ENCODE measurements at regions of chr18 and their contacts with region 1.

Region 1: DNA sequence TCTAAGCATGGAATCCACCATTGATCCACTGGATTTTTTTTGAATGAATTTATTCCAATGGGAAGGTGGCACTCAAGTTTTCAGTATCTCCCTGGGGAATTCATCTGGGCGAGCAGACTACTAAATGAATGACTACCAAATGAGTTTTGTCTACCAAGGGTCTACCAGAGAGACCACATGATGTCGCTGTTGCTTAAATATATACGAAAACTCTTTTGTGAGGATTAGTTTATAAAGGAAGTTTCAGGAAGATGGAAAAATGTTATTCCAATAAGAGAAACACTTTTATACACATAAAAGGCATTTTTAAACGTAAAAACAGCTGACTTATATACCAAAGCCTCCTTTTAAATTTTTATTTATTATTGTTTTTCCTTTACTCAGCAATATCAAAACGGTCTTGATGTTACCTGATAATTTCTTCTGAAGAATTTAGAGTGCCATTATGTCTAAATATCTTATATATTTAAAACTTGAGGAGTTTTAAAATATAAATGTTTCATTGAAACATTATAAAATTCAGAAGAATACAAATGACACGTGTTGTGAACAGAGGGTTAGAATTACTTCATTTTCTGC is 139.7 kb downstream of the HRH4 start:
- DNase-seq: no peak
- H3K4me3 ChIP-seq: no peak overlapping the region
- H3K27ac ChIP-seq: no peak overlapping the region
- H3K4me1 ChIP-seq: no peaks in the 10 kb centered on the region
- H3K27me3 ChIP-seq: peaks cover 28% of the 10 kb centered on the region
- CTCF ChIP-seq: peak; percentile 78

Region 2: GRCh38 chr18:24111936-24112335 is 488.2 kb before region 1 on chr18:
- intact Hi-C with region 1: no loop called
- DNase-seq: no peak
- H3K4me3 ChIP-seq: no peak overlapping the region
- H3K27ac ChIP-seq: no peak overlapping the region
- H3K4me1 ChIP-seq: no peaks in the 10 kb centered on the region
- H3K27me3 ChIP-seq: no peaks in the 10 kb centered on the region
- CTCF ChIP-seq: no peak

Region 3: DNA sequence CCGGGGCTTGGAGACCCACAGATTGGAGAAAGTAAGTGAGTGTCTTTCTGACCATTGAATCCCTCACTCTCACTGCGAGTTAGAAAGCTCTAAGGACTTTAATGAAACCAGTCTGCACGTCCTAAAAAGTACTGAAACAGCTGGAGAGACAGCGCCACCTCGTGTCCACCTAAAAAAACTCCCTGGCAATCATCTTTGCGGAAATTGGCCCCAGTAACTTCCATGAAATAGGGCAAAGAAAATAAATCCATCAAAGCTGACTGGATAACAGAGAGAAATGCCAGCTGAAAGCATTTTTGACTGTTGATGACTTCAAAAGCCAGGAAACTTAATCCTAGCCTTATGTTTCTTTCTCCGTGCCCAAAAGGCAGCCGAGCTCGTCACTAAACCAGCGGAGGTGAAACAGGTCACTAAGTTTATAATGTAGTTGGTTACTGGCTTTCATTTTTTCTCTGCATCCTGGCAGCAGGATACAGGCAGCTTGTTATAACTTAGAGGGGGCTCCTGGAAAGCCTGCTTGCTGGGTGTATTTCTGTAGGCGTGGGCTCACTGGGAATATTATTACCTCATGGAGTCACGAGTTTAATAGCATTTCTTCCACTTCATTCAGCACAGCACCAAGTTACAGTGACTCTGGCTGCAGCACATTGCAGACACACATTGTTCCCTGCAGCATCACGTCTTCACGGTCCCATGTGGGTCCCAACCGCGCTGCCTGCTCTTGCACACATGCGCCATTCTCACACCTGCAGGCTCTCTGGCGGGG is 126.7 kb after region 1 on chr18:
- intact Hi-C with region 1: loop called (anchors 2 kb)
- DNase-seq: peak; percentile 42
- H3K4me3 ChIP-seq: peak overlapping the region; percentile 41
- H3K27ac ChIP-seq: no peak overlapping the region
- H3K4me1 ChIP-seq: peaks cover 5% of the 10 kb centered on the region
- H3K27me3 ChIP-seq: peaks cover 24% of the 10 kb centered on the region
- CTCF ChIP-seq: peak; percentile 85

Region 4: GRCh38 chr18:24831871-24832665 is 231.9 kb after region 1 on chr18:
- intact Hi-C with region 1: no loop called
- DNase-seq: no peak
- H3K4me3 ChIP-seq: no peak overlapping the region
- H3K27ac ChIP-seq: no peak overlapping the region
- H3K4me1 ChIP-seq: no peaks in the 10 kb centered on the region
- H3K27me3 ChIP-seq: peaks cover 33% of the 10 kb centered on the region
- CTCF ChIP-seq: no peak